Endothelial cell of umbilical vein (primary cell): ENCODE measurements at regions of chr6 and their contacts with region 1.

Region 1: DNA sequence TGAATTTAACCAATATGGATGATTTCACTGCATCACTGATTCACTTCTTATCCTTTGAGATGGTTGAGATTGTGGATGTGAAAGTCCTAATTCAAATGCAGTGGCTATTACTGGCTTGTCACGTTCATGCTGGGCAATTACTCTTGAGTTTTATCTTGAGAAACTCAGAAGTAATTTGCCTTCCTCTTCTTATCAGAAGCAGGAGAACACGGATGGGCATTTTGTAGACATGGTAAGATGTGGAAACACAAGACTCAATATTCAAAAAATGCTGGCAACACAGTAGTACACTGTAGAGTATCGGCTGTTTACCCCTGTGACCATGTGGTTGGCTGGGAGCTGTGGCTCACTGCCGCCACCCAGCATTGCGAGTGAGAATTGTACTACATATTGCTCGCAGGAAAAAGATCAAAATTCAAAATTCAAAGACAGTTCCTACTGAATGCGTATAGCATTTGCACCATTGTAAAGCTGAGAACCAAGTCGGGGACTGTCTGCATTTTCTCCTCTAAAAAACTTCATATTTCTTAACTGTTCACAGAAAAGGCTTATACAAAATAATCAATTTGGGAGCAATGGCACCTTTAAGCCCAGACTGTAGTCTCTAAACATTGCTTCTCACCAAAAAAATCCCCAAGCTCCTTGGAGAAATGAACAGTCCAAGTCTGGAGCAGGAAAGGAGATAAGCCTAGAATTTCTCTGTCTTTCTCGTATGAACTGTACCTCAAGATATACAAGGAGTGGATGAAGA is 61.9 kb upstream of the ELOVL5 start:
- DNase-seq: peak; percentile 56
- H3K4me3 ChIP-seq: no peak overlapping the region
- H3K27ac ChIP-seq: no peak overlapping the region
- H3K4me1 ChIP-seq: no peaks in the 10 kb centered on the region
- H3K27me3 ChIP-seq: peaks cover 9 to 16% of the 10 kb centered on the region in 2 experiments
- CTCF ChIP-seq: peak; percentile 55 to 61
- POLR2A ChIP-seq: no peak

Region 2: GRCh38 chr6:53273370-53273769 is 137.3 kb before region 1 on chr6:
- CTCF ChIA-PET with region 1: no interaction called
- POLR2A ChIA-PET with region 1: no interaction called
- dilution Hi-C with region 1: no loop called
- intact Hi-C with region 1: loop called (anchors 5 kb)
- DNase-seq: no peak
- H3K4me3 ChIP-seq: no peak overlapping the region
- H3K27ac ChIP-seq: no peak overlapping the region
- H3K4me1 ChIP-seq: no peaks in the 10 kb centered on the region
- H3K27me3 ChIP-seq: no peaks in the 10 kb centered on the region
- CTCF ChIP-seq: no peak
- POLR2A ChIP-seq: no peak

Region 3: DNA sequence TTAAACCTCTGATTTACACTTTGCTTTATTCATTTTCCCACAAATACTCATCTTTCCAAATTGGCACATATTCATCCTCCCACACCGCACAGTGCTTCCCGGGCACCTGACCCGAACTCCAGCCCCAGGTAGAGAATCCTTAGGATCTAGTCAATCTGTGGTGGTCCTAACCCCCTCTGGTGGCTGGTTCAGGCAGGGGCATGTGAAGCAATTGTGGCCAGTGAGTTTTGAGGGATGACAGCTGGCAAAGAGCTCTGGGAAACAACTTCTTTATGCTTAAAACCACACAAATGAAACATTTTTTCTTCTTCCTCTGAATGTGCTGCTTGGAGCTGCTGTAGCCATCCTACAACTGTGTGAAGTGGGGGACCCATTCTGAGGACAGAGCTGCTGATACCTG is 116.6 kb before region 1 on chr6:
- CTCF ChIA-PET with region 1: interaction called, 3 read pairs
- POLR2A ChIA-PET with region 1: no interaction called
- dilution Hi-C with region 1: no loop called
- intact Hi-C with region 1: loop called (anchors 5 kb)
- DNase-seq: peak; percentile 44
- H3K4me3 ChIP-seq: no peak overlapping the region
- H3K27ac ChIP-seq: no peak overlapping the region
- H3K4me1 ChIP-seq: peaks cover 14% of the 10 kb centered on the region
- H3K27me3 ChIP-seq: no peaks in the 10 kb centered on the region
- CTCF ChIP-seq: peak; percentile 67 to 77
- POLR2A ChIP-seq: no peak

Region 4: DNA sequence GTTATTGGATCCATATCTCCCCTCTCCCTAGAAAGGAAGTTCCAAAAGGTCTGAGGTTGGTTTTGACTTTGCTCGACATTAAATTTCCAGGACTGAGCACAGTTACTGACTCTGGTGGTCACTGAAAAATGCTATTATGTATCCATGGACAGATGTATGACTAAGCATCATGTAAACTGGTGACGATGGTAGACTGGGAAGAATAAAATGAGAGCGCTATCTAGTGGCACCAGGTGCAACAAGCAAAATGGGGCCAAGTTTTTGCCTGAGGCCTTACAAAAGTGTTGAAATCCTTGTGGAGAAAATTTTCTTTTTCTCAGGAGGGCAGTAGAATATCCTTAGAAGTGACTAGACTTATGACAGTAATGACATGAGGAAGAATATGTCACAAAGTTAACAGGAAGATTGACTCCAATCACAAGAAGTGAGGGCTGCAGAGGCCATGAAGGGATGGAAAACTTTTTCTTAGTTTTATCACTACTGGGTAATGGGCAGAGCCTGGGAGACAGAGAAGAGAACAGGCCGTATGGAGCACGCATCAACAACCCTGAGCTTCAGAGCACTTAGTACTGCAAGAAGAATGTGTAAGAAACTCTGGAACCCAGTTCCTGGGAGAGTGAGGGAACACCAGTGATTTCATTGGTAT is 27.0 kb after region 1 on chr6:
- CTCF ChIA-PET with region 1: interaction called, 3 read pairs
- POLR2A ChIA-PET with region 1: no interaction called
- dilution Hi-C with region 1: no loop called
- intact Hi-C with region 1: loop called (anchors 2 kb)
- DNase-seq: peak; percentile 64
- H3K4me3 ChIP-seq: no peak overlapping the region
- H3K27ac ChIP-seq: no peak overlapping the region
- H3K4me1 ChIP-seq: no peaks in the 10 kb centered on the region
- H3K27me3 ChIP-seq: peaks cover 3 to 4% of the 10 kb centered on the region in 2 experiments
- CTCF ChIP-seq: peak; percentile 59 to 68
- POLR2A ChIP-seq: no peak

Region 5: GRCh38 chr6:53530346-53530745 is 119.7 kb after region 1 on chr6:
- CTCF ChIA-PET with region 1: no interaction called
- POLR2A ChIA-PET with region 1: no interaction called
- dilution Hi-C with region 1: no loop called
- intact Hi-C with region 1: no loop called
- DNase-seq: no peak
- H3K4me3 ChIP-seq: no peak overlapping the region
- H3K27ac ChIP-seq: no peak overlapping the region
- H3K4me1 ChIP-seq: no peaks in the 10 kb centered on the region
- H3K27me3 ChIP-seq: no peaks in the 10 kb centered on the region
- CTCF ChIP-seq: no peak
- POLR2A ChIP-seq: no peak

Region 6: DNA sequence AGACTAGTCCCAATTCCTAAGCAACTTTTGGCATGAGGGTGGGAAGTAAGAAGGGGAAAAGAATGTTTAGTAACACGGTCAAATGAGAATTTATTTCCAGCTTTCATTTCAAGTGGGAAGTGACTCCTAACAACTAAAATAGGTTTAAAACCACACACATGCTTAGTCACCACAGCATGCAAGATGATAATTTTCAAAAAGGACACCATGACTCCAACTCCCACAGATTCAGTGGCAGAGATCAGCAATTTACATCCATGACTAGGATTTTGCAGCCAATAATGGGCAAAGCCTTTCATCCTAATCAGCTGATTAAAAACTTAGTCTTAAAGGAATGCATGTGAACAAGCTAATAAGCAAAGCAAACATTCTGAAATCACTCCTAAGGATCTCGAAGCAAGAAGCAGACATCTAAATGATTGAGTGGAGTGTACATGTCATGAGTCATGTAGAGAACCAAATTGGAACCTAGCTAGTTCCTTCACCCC is 182.4 kb after region 1 on chr6:
- CTCF ChIA-PET with region 1: no interaction called
- POLR2A ChIA-PET with region 1: no interaction called
- dilution Hi-C with region 1: no loop called
- intact Hi-C with region 1: no loop called
- DNase-seq: no peak
- H3K4me3 ChIP-seq: no peak overlapping the region
- H3K27ac ChIP-seq: no peak overlapping the region
- H3K4me1 ChIP-seq: no peaks in the 10 kb centered on the region
- H3K27me3 ChIP-seq: no peaks in the 10 kb centered on the region
- CTCF ChIP-seq: no peak
- POLR2A ChIP-seq: no peak